Activated naive CD8-positive, alpha-beta T cell treated with anti-CD3 and anti-CD28 coated beads, Interleukin-2, amount 10 ng/mL, durations not matched to agents 7 days and 5 days (primary cell): ENCODE measurements at regions of chr3 and their contacts with region 1.

Region 1: GRCh38 chr3:18424729-18425640 is at the start of gene SATB1:
- DNase-seq: peak; percentile 79
- ATAC-seq: peak; percentile 13
- H3K4me3 Mint-ChIP-seq: peak within 1 kb of the TSS; percentile 87
- H3K27ac Mint-ChIP-seq: peak within 1 kb of the TSS; percentile 91
- H3K4me1 Mint-ChIP-seq: peaks cover 54% of the 10 kb centered on the region
- H3K27me3 Mint-ChIP-seq: no peaks in the 10 kb centered on the region
- total RNA-seq, gene SATB1: 281 to 288 TPM

Region 2: DNA sequence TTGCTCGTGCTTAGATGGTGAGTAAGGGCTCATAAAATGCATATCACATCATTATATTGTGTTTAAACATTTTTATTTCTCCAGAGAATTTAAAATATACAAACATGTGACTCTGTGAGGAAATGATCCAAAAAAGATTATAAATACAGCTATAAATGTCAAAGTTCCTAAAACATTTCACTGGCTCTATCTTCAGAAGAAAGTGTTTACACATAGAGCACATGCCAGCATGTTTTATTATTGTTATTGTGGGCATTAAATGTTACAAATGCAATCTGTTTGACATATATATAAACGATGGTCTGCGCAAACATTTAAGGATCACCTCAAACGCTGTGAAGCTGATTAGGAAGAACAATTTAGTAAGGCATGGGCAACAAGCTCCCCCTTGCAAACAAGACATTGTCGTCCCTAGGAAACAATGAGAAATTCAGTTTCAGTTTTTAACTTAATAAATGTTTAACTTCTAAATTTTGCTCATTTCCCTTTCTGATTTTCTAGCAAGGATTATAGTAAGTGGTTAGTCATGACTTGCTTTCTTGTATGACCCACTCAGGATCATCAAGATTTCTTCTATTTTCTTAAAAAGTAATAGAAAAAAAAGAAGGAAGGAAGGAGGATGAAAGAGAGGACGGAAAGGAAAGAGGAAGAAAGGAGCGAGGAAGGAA is 207.3 kb before region 1 on chr3:
- POLR2A ChIA-PET with region 1: no interaction called
- DNase-seq: no peak
- ATAC-seq: no peak
- H3K4me3 Mint-ChIP-seq: no peak overlapping the region
- H3K27ac Mint-ChIP-seq: no peak overlapping the region
- H3K4me1 Mint-ChIP-seq: peaks cover 2% of the 10 kb centered on the region
- H3K27me3 Mint-ChIP-seq: no peaks in the 10 kb centered on the region

Region 3: DNA sequence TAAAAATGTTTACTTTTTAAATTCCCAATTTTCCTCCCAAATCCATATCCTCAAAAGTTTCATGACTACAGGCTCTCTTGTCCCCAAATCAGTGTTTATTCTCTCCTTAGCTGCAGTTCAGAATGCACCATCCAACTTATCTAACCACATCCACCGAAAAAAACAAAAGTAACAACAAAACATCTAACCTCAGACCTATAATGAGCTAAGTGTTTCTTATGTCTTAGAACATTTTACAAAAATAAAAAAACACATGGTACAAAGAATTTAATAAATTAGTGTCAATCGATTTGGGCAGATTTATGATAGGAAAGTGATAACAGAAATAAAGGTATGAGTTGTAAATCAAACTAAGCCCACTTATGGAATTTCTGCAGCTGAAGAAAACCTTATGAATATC is 13.4 kb before region 1 on chr3:
- POLR2A ChIA-PET with region 1: interaction called, 385 read pairs
- DNase-seq: no peak
- ATAC-seq: peak; percentile 31
- H3K4me3 Mint-ChIP-seq: peak overlapping the region; percentile 71
- H3K27ac Mint-ChIP-seq: peak overlapping the region; percentile 75
- H3K4me1 Mint-ChIP-seq: peaks cover 76% of the 10 kb centered on the region
- H3K27me3 Mint-ChIP-seq: no peaks in the 10 kb centered on the region

Region 4: GRCh38 chr3:18438586-18438985 is 13.6 kb after region 1 on chr3:
- POLR2A ChIA-PET with region 1: interaction called, 385 read pairs
- DNase-seq: peak; percentile 72
- ATAC-seq: peak; percentile 83
- H3K4me3 Mint-ChIP-seq: peak overlapping the region; percentile 89
- H3K27ac Mint-ChIP-seq: peak overlapping the region; percentile 93
- H3K4me1 Mint-ChIP-seq: peaks cover 43% of the 10 kb centered on the region
- H3K27me3 Mint-ChIP-seq: no peaks in the 10 kb centered on the region

Region 5: GRCh38 chr3:18489939-18490338 is 65.0 kb after region 1 on chr3:
- POLR2A ChIA-PET with region 1: no interaction called
- DNase-seq: no peak
- ATAC-seq: peak; percentile 71
- H3K4me3 Mint-ChIP-seq: no peak overlapping the region
- H3K27ac Mint-ChIP-seq: no peak overlapping the region
- H3K4me1 Mint-ChIP-seq: peaks cover 10% of the 10 kb centered on the region
- H3K27me3 Mint-ChIP-seq: no peaks in the 10 kb centered on the region